Right ventricle myocardium superior (tissue), 1 donor: ENCODE measurements at regions of chr17 and their contacts with region 1.

Region 1: GRCh38 chr17:17476865-17477467 is at the start of gene MED9:
- DNase-seq: peak; percentile 96
- ATAC-seq: peak; percentile 99
- total RNA-seq, gene MED9: 37.5 TPM

Region 2: DNA sequence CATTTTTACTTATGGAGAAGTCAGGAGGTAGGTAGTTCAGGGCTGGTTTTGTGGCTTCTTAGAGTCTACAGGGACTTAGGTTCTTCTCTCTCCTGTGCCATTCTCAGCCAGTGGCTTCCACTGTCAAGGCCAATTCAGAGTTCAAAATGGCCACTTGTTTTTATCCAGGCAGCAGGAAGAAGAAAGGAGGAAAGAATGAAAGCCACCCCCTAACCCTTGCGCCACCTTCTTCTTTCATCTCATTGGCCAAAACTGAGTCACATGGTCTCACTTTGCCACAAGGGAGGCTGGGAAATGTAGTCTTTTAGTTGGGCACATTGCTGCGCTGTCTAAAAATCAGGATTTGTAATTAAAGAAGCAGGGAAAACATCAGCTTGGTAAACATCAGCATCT is 61.0 kb before region 1 on chr17:
- intact Hi-C with region 1: loop called (anchors 5 kb)
- DNase-seq: no peak
- ATAC-seq: peak; percentile 28